OCI-LY7 (cell line): ENCODE measurements at regions of chr11 and their contacts with region 1.

Region 1: GRCh38 chr11:1694064-1694845 is 2.7 kb upstream of the KRTAP5-6 start:
- DNase-seq: peak; percentile 82
- H3K4me3 ChIP-seq: no peak overlapping the region
- H3K27ac ChIP-seq: no peak overlapping the region
- H3K4me1 ChIP-seq: no peaks in the 10 kb centered on the region
- CTCF ChIP-seq: peak; percentile 83

Region 2: GRCh38 chr11:1652771-1653540 is 41.3 kb before region 1 on chr11:
- CTCF ChIA-PET with region 1: interaction called, 3 read pairs
- POLR2A ChIA-PET with region 1: no interaction called
- intact Hi-C with region 1: loop called (anchors 5 kb)
- DNase-seq: peak; percentile 57
- H3K4me3 ChIP-seq: no peak overlapping the region
- H3K27ac ChIP-seq: no peak overlapping the region
- H3K4me1 ChIP-seq: no peaks in the 10 kb centered on the region
- CTCF ChIP-seq: peak; percentile 96

Region 3: GRCh38 chr11:1832211-1832919 is 138.1 kb after region 1 on chr11:
- CTCF ChIA-PET with region 1: interaction called, 27 read pairs
- POLR2A ChIA-PET with region 1: interaction called, 3 read pairs
- intact Hi-C with region 1: loop called (anchors 1 kb)
- DNase-seq: peak; percentile 58
- H3K4me3 ChIP-seq: no peak overlapping the region
- H3K27ac ChIP-seq: no peak overlapping the region
- H3K4me1 ChIP-seq: no peaks in the 10 kb centered on the region
- CTCF ChIP-seq: peak; percentile 92

Region 4: GRCh38 chr11:1917671-1918516 is 223.6 kb after region 1 on chr11:
- CTCF ChIA-PET with region 1: no interaction called
- POLR2A ChIA-PET with region 1: no interaction called
- intact Hi-C with region 1: loop called (anchors 10 kb)
- DNase-seq: no peak
- H3K4me3 ChIP-seq: no peak overlapping the region
- H3K27ac ChIP-seq: no peak overlapping the region
- H3K4me1 ChIP-seq: no peaks in the 10 kb centered on the region
- CTCF ChIP-seq: no peak; the same call in 1 of the 2 replicates

Region 5: GRCh38 chr11:2151500-2152257 is 457.4 kb after region 1 on chr11:
- CTCF ChIA-PET with region 1: no interaction called
- POLR2A ChIA-PET with region 1: no interaction called
- intact Hi-C with region 1: loop called (anchors 5 kb)
- DNase-seq: peak; percentile 80
- H3K4me3 ChIP-seq: no peak overlapping the region
- H3K27ac ChIP-seq: no peak overlapping the region
- H3K4me1 ChIP-seq: peaks cover 4% of the 10 kb centered on the region
- CTCF ChIP-seq: peak; percentile 76